ENCODE measurements at regions of chr2 and their contacts with region 1.

Region 1: GRCh38 chr2:160429248-160430000 is 64.2 kb downstream of the RBMS1 start:
- DNase-seq: no peak
- ATAC-seq: no peak
- H3K4me3 Mint-ChIP-seq: no peak overlapping the region
- H3K27ac Mint-ChIP-seq: no peak overlapping the region
- H3K4me1 Mint-ChIP-seq: peaks cover 21% of the 10 kb centered on the region
- H3K27me3 Mint-ChIP-seq: no peaks in the 10 kb centered on the region
- CTCF ChIP-seq: 0 out of 2 replicates have a peak, but pooled peaks have one; percentile 4

Region 2: GRCh38 chr2:160406591-160407392 is 22.6 kb before region 1 on chr2:
- CTCF ChIA-PET with region 1: interaction called, 11 read pairs
- POLR2A ChIA-PET with region 1: no interaction called
- DNase-seq: no peak
- ATAC-seq: peak; percentile 7
- H3K4me3 Mint-ChIP-seq: peak overlapping the region; percentile 85
- H3K27ac Mint-ChIP-seq: no peak overlapping the region
- H3K4me1 Mint-ChIP-seq: peaks cover 63% of the 10 kb centered on the region
- H3K27me3 Mint-ChIP-seq: peaks cover 44% of the 10 kb centered on the region
- CTCF ChIP-seq: no peak

Region 3: GRCh38 chr2:160415991-160416390 is 13.4 kb before region 1 on chr2:
- CTCF ChIA-PET with region 1: interaction called, 14 read pairs
- POLR2A ChIA-PET with region 1: no interaction called
- DNase-seq: no peak
- ATAC-seq: no peak
- H3K4me3 Mint-ChIP-seq: no peak overlapping the region
- H3K27ac Mint-ChIP-seq: no peak overlapping the region; the same call in 1 of the 2 replicates
- H3K4me1 Mint-ChIP-seq: peaks cover 39% of the 10 kb centered on the region
- H3K27me3 Mint-ChIP-seq: no peaks in the 10 kb centered on the region
- CTCF ChIP-seq: no peak

Region 4: DNA sequence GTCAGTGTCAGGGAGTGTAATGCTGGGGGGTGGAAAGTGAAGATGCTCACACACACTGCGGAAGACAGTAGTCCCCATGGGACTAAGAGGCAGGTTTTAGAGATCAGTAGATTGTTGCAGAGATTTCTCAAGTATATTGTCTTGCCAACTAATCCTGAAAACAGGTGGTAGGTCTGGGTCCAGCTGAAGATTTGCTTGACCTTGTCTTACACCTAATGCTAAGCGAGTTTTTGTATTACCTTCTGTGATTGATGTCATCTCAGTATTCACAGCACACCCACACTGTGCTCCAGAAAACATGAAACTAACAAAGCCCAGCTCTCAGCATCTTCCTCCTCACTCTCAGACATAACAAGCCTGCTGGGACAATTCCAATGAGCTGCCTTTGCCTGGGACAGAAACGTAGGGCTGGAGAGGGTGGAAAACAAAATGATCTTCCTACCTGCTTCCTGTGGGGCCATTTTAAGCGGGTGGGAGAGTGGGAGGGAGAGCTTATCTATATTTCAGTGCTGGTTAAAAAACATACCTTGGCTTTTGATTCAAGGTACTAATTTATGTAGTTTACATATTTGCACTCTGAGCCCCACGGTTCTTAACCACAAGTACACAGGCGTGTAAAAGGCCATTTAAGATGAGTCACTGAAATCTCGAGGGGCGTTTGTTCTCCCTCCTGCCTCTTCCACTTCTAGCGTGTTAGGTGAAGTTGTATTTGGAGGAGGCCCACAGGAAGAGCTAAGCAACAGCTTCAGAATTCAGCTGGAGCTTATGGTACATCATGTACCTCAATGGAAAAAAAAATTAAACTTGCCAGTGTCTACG is 87.3 kb after region 1 on chr2:
- CTCF ChIA-PET with region 1: no interaction called
- POLR2A ChIA-PET with region 1: no interaction called
- DNase-seq: no peak
- ATAC-seq: no peak
- H3K4me3 Mint-ChIP-seq: no peak overlapping the region
- H3K27ac Mint-ChIP-seq: no peak overlapping the region
- H3K4me1 Mint-ChIP-seq: peaks cover 16% of the 10 kb centered on the region
- H3K27me3 Mint-ChIP-seq: no peaks in the 10 kb centered on the region; the same call in 1 of the 2 replicates
- CTCF ChIP-seq: no peak

Measured in WTC11 (cell line).